Activated CD4-positive, alpha-beta T cell treated with anti-CD3 and anti-CD28 coated beads, Interleukin-2, amount 10 ng/mL, durations not matched to agents 24 days and 14 days (primary cell): ENCODE measurements at regions of chr1 and their contacts with region 1.

Region 1: DNA sequence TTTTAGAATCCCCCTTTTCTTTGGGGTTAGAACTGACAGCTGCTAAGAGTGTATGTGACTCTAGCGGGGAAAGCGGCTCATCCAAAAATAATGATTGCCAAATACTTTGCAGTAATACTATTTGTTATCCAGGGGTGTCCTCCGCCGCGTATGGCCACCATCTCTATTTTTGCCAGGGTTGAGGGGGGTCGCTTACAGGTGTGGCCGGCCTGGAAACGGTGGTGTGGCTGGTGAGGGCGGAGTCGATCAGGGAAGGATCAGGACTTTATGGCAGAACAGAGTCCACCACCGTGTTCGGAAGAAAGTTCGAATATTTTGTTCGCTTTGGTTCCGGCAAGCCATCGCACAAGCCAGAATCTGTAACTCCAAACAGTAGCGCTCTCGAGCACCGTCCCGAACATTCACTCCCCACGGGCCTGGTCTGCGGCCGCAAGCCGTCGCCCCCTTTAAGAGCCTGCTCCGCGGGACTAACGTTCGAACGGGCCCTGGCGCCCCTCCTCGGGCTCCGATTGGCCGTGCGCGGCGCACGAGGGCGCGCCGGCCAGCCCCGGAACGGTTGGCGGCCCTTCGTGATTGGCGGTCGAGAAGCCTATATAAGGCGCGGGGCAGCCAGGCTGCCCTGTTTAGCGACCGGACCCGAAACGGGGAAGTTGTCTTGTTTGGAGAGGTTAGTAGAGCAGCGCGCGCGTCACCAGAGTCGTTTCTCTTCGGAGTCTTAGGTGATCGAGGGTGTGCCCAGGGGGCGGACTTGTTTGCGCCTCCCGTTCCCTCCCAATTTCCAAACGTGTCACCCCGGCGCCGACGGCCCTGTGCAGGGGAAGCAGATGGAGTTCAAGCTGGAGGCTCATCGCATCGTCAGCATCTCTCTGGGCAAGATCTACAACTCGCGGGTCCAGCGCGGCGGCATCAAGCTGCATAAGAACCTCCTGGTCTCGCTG is at the start of gene IER5:
- DNase-seq: peak; percentile 99
- H3K4me3 Mint-ChIP-seq: peak within 1 kb of the TSS; percentile 99
- H3K27ac Mint-ChIP-seq: peak within 1 kb of the TSS; percentile 98
- H3K4me1 Mint-ChIP-seq: peaks cover 48% of the 10 kb centered on the region
- H3K27me3 Mint-ChIP-seq: peaks cover 6% of the 10 kb centered on the region
- total RNA-seq, gene IER5: 48.3 and 48.6 TPM in 2 replicates

Region 2: DNA sequence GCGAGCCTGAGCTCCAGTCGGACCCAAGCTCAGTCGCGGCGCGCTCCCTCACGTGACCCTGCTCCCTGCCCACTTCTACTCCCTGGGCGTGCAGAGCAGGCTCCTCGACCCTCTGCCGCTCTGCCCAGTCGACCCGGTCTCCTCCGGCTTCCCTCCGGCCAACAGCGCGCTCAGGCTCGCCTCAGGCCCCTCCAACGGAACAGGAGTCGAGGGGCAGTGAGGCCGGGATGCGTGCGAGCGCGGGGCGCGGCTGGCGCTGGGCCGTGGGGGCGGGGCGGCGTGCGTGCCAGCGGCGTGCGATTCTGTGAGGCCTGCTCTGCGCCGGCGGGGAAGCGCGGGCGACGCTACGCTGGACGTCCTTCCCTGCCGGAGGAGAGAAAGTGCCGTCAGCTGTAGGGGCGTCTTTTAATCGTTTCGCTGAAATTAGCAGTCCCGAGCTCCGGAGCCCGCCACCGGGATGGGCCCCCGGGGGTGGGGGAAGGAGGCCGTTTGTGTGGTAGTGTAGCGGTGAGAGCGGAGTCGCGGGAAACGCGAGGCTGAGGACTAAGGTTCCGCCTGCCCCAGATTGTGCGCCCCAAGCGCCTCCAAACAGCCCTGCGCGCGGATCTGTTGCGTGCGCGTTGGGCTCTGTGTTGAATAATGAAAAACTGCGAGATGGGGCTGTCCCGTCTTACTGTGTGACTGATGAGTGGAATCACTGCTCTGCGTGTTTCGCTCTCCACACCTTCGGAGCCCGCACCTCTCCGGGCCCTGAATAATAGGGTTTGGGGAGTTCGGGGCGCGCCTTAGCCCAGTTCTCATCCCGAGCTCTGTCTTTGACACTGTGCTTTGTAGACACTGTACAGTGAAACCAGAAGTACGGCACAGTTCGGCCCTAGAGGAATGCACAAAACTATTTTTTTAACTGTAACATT is 585.7 kb before region 1 on chr1 and contains the start of gene ACBD6:
- intact Hi-C with region 1: loop called (anchors 5 kb)
- DNase-seq: peak; percentile 96
- H3K4me3 Mint-ChIP-seq: peak within 1 kb of the TSS; percentile 97
- H3K27ac Mint-ChIP-seq: peak within 1 kb of the TSS; percentile 97
- H3K4me1 Mint-ChIP-seq: peaks cover 20% of the 10 kb centered on the region
- H3K27me3 Mint-ChIP-seq: peaks cover 5% of the 10 kb centered on the region
- total RNA-seq, gene ACBD6: 49.8 and 54.7 TPM in 2 replicates

Region 3: GRCh38 chr1:181021811-181022434 is 66.4 kb before region 1 on chr1:
- intact Hi-C with region 1: loop called (anchors 1 kb)
- DNase-seq: peak; percentile 84
- H3K4me3 Mint-ChIP-seq: peak overlapping the region; percentile 96
- H3K27ac Mint-ChIP-seq: peak overlapping the region; percentile 96
- H3K4me1 Mint-ChIP-seq: peaks cover 38% of the 10 kb centered on the region
- H3K27me3 Mint-ChIP-seq: peaks cover 21% of the 10 kb centered on the region

Region 4: GRCh38 chr1:181044449-181044966 is 43.8 kb before region 1 on chr1:
- intact Hi-C with region 1: loop called (anchors 1 kb)
- DNase-seq: peak; percentile 87
- H3K4me3 Mint-ChIP-seq: peak overlapping the region; percentile 48
- H3K27ac Mint-ChIP-seq: peak overlapping the region; percentile 89
- H3K4me1 Mint-ChIP-seq: peaks cover 40% of the 10 kb centered on the region
- H3K27me3 Mint-ChIP-seq: no peaks in the 10 kb centered on the region

Region 5: GRCh38 chr1:181105134-181106021 is 17.0 kb after region 1 on chr1:
- intact Hi-C with region 1: loop called (anchors 1 kb)
- DNase-seq: peak; percentile 97
- H3K4me3 Mint-ChIP-seq: peak overlapping the region; percentile 86
- H3K27ac Mint-ChIP-seq: peak overlapping the region; percentile 90
- H3K4me1 Mint-ChIP-seq: peaks cover 73% of the 10 kb centered on the region
- H3K27me3 Mint-ChIP-seq: peaks cover 40% of the 10 kb centered on the region

Region 6: GRCh38 chr1:181166377-181167196 is 78.2 kb after region 1 on chr1:
- intact Hi-C with region 1: loop called (anchors 1 kb)
- DNase-seq: peak; percentile 93
- H3K4me3 Mint-ChIP-seq: peak overlapping the region; percentile 8
- H3K27ac Mint-ChIP-seq: no peak overlapping the region
- H3K4me1 Mint-ChIP-seq: peaks cover 3% of the 10 kb centered on the region
- H3K27me3 Mint-ChIP-seq: peaks cover 11% of the 10 kb centered on the region

Region 7: GRCh38 chr1:182614796-182615454 is 1526.6 kb after region 1 on chr1:
- intact Hi-C with region 1: loop called (anchors 10 kb)
- DNase-seq: peak; percentile 83
- H3K4me3 Mint-ChIP-seq: peak overlapping the region; percentile 70
- H3K27ac Mint-ChIP-seq: peak overlapping the region; percentile 94
- H3K4me1 Mint-ChIP-seq: peaks cover 62% of the 10 kb centered on the region
- H3K27me3 Mint-ChIP-seq: peaks cover 31% of the 10 kb centered on the region